ENCODE measurements at regions of chr6 and their contacts with region 1.

Region 1: DNA sequence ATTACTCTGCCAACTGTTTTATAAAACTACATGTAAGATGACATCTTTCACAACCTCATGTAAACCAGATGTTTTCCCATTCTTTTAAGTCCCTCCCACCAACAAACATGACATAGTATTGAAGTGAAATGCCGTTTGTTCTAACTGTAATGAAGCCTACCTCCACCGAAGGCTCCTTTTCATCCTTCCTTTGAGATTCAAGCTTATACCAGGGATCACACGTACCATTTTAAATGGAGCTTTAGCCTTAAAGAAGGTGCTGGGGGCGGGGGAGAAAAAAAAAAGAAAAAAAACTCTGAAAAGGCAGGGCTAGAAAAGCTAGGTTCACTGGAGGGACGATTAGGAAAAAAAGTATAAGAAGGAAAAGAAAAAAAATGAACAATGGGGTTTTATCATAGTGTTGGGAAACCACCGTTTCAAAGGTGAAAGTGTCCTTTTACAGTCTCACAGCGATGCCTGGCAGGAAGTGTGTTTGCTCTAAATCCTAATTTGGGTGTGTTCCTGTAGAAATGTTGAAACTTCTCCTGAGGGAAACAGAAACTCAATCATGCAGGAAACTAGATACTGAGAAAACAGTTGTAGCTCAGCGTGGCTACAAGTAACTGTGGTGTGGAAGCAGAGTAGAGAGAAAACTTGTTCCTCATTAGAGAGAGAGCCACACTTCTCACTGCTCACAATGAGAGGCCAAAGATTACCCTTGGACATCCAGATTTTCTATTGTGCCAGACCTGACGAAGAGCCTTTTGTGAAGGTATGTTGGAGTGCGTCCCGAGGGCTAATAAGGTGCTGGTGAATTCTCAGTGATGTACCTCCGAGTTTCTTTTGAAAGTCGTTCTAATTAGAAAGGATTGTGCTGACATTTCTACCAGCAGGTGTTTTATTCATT is 37.6 kb upstream of the HINT3 start:
- DNase-seq: peak; percentile 97
- ATAC-seq: peak; percentile 97
- H3K4me3 ChIP-seq: peak overlapping the region; percentile 51 to 65 (median 52)
- H3K27ac ChIP-seq: peak overlapping the region; percentile 84
- H3K4me1 ChIP-seq: peaks cover 62% of the 10 kb centered on the region
- H3K27me3 ChIP-seq: no peaks in the 10 kb centered on the region
- CTCF ChIP-seq: no peak
- EP300 ChIP-seq: peak in 1 of 2 experiments; percentile 64; a peak in 2 of 4 replicates
- POLR2A ChIP-seq: peak; percentile 46 to 96; a peak in 3 of 4 replicates
- RAD21 ChIP-seq: no peak; the same call in 1 of the 2 replicates

Region 2: DNA sequence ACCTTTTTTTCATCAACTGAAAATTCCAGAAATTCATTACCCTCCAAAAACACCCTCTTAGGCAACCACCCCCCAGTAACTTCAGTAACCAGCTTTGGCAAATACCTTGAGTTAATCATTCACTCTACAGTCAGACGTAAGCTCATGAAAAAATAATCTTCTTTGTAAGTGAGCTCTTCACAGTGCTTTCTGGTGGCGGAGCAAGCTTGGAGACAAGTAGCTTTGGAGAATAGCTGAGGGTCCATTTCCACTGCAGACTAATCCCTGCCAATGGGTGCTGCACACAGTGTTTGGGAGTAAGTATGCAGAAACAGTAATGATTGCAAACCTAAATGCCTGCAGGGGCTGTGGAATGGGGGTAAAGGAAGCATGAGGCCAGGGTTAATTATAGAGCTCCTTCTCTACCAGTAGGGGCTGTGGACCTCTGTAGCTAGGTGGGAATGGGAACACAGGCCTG is 19.2 kb before region 1 on chr6:
- CTCF ChIA-PET with region 1: no interaction called
- POLR2A ChIA-PET with region 1: interaction called, 10 read pairs
- in situ Hi-C with region 1: no loop called
- intact Hi-C with region 1: no loop called
- DNase-seq: peak; percentile 86
- ATAC-seq: peak; percentile 99
- H3K4me3 ChIP-seq: peak overlapping the region; percentile 39 to 59 (median 56); a peak in 4 of 6 replicates
- H3K27ac ChIP-seq: peak overlapping the region; percentile 81
- H3K4me1 ChIP-seq: peaks cover 53% of the 10 kb centered on the region
- H3K27me3 ChIP-seq: no peaks in the 10 kb centered on the region
- CTCF ChIP-seq: peak; percentile 48
- EP300 ChIP-seq: peak in 1 of 2 experiments; percentile 58; a peak in 1 of 4 replicates
- POLR2A ChIP-seq: peak; percentile 54 to 56; a peak in 3 of 4 replicates
- RAD21 ChIP-seq: no peak

Measured in HepG2 (cell line).